PC-3 (cell line): ENCODE measurements at regions of chr6 and their contacts with region 1.

Region 1: DNA sequence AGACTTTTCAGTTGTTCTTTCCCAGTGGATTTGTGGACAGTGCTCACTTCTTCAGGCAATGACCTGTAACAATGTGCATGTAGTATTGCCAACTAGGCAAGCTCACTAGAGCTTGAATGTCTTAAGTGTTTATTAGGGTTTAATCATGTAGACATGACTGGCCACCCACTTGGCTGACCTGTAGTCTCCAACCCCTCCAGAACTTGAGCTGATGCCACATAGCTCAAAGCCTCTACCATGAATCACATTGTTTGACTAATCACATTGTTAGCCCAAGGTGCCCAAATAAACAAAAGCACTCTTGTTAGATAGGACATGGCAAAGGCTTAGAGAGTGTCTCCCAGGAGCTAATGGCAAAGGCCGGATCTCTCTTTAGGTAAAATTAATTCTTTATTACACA is 272.7 kb downstream of the GRIK2 start:
- DNase-seq: peak; percentile 90
- ATAC-seq: peak; percentile 94
- H3K4me3 ChIP-seq: 0 out of 2 replicates have a peak overlapping the region, but pooled peaks have one; percentile 23
- H3K27ac ChIP-seq: peak overlapping the region; percentile 56
- H3K4me1 ChIP-seq: peaks cover 19% of the 10 kb centered on the region
- H3K27me3 ChIP-seq: no peaks in the 10 kb centered on the region
- CTCF ChIP-seq: no peak

Region 2: DNA sequence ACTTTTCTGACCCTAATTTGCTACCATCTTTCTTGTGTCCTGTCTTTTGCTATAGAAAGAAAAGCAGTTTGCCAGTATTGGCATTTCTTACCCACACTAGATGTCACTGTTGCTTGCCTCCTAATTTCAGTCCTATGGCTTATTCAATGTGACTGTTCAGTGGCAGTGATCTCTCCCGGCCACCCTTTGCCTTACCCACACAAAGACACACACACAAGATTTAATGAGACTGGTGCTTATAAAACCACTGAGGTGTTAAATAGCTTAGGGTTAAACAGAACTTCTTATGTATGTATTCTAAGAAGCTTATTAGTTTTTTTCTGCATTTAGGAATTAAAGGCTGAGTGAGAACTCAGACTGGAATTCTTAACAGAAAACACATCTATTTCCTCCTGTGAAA is 551.6 kb before region 1 on chr6:
- CTCF ChIA-PET with region 1: no interaction called
- POLR2A ChIA-PET with region 1: no interaction called
- intact Hi-C with region 1: loop called (anchors 10 kb)
- DNase-seq: peak; percentile 58
- ATAC-seq: peak; percentile 51
- H3K4me3 ChIP-seq: no peak overlapping the region
- H3K27ac ChIP-seq: no peak overlapping the region
- H3K4me1 ChIP-seq: peaks cover 53% of the 10 kb centered on the region
- H3K27me3 ChIP-seq: no peaks in the 10 kb centered on the region
- CTCF ChIP-seq: peak; percentile 66

Region 3: GRCh38 chr6:101722991-101723579 is 56.8 kb after region 1 on chr6:
- CTCF ChIA-PET with region 1: no interaction called
- POLR2A ChIA-PET with region 1: no interaction called
- intact Hi-C with region 1: loop called (anchors 5 kb)
- DNase-seq: peak; percentile 73
- ATAC-seq: peak; percentile 95
- H3K4me3 ChIP-seq: no peak overlapping the region
- H3K27ac ChIP-seq: peak overlapping the region; percentile 69
- H3K4me1 ChIP-seq: peaks cover 20% of the 10 kb centered on the region
- H3K27me3 ChIP-seq: no peaks in the 10 kb centered on the region
- CTCF ChIP-seq: no peak

Region 4: GRCh38 chr6:101741474-101742171 is 75.4 kb after region 1 on chr6:
- CTCF ChIA-PET with region 1: no interaction called
- POLR2A ChIA-PET with region 1: no interaction called
- intact Hi-C with region 1: loop called (anchors 1 kb)
- DNase-seq: no peak
- ATAC-seq: peak; percentile 60
- H3K4me3 ChIP-seq: no peak overlapping the region
- H3K27ac ChIP-seq: no peak overlapping the region
- H3K4me1 ChIP-seq: no peaks in the 10 kb centered on the region
- H3K27me3 ChIP-seq: no peaks in the 10 kb centered on the region
- CTCF ChIP-seq: no peak